ENCODE measurements at regions of chr4 and their contacts with region 1.

Region 1: GRCh38 chr4:6673660-6674499 is 19.8 kb upstream of the S100P start:
- DNase-seq: peak; percentile 92 to 97 (median 94)
- ATAC-seq: peak; percentile 83 to 86
- H3K4me3 Mint-ChIP-seq: peak overlapping the region; percentile 78 to 100 (median 96)
- H3K27ac Mint-ChIP-seq: peak overlapping the region; percentile 96 to 99 (median 99)
- H3K4me1 Mint-ChIP-seq: peaks cover 37 to 58% (median 53%) of the 10 kb centered on the region in 4 donors
- H3K27me3 Mint-ChIP-seq: peaks cover 0 to 6% (median 0%) of the 10 kb centered on the region in 5 donors

Region 2: GRCh38 chr4:6546681-6547447 is 127.0 kb before region 1 on chr4:
- POLR2A ChIA-PET with region 1: no interaction called
- DNase-seq: peak in 9 of 10 donors; percentile 6 to 67 (median 42)
- ATAC-seq: peak; percentile 55 to 59
- H3K4me3 Mint-ChIP-seq: peak overlapping the region in 1 of 10 donors; percentile 70
- H3K27ac Mint-ChIP-seq: peak overlapping the region in 1 of 10 donors; percentile 67
- H3K4me1 Mint-ChIP-seq: peaks cover 0 to 10% (median 1%) of the 10 kb centered on the region in 4 donors
- H3K27me3 Mint-ChIP-seq: peaks cover 11 to 68% (median 41%) of the 10 kb centered on the region in 5 donors

Region 3: DNA sequence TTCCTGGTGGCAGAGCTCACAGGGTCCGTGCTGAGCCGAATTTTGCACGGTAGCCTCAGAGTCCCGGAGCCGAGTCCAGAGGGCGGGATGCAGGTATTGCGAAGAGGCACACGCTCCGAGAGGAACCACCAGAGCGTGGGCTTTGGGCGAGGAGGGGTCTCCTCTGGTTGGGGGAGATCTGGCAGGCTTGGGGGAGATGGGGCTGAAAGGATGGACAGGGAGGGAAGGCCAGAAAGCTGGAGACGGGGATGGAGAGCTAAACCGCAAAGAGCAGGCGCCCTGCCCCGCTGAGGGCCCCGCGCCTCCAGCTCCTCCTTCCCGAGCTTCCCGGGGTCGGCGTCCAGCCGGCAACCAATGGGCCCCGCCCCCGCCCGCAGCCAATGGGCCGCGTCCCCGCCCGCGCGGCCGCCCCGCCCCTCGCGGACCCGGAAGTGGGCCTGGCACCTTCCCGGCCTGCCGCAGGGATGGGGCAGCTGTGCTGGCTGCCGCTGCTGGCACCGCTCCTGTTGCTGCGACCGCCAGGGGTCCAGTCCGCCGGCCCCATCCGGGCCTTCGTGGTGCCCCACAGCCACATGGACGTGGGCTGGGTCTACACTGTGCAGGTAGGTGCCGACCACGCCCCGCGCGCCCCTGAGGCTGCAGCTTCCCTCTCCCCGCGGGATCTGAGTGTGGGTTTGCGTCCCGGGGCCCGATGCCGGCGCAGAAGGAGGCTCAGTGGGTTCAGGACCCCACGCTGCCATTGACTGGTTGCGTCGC is 99.0 kb before region 1 on chr4 and contains the start of gene MAN2B2:
- POLR2A ChIA-PET with region 1: interaction called, 15 read pairs
- DNase-seq: peak; percentile 63 to 87 (median 78)
- ATAC-seq: peak; percentile 91 to 94
- H3K4me3 Mint-ChIP-seq: peak within 1 kb of the TSS; percentile 85 to 96 (median 90)
- H3K27ac Mint-ChIP-seq: peak within 1 kb of the TSS; percentile 65 to 94 (median 90)
- H3K4me1 Mint-ChIP-seq: peaks cover 11 to 20% (median 12%) of the 10 kb centered on the region in 4 donors
- H3K27me3 Mint-ChIP-seq: no peaks in the 10 kb centered on the region
- polyA plus RNA-seq, gene MAN2B2: 11.8 to 30.4 (median 14.4) TPM

Region 4: DNA sequence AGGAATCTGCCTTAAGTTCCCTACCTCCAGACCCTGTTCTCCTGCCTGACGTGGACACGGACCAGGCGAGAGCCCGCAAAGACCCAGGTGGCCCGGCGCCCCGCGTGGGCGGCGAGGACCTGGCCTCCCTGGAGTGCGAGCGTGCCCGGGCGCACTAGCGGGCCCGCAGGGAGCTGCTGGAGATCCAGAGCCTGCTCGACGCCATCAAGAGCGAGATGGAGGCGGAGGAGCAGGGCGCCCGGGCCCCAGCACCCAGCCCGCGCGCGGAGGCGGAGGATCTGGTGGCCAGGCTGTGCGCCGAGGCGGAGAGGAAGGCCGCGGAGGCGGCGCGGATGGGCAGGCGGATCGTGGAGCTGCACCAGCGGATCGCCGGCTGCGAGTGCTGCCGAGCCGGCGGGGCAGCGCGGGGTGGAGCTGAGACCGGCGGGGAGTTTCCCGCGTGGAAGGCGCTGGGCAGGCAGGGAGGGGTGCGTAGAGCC is 15.2 kb before region 1 on chr4:
- POLR2A ChIA-PET with region 1: interaction called, 38 read pairs
- DNase-seq: peak; percentile 37 to 75 (median 54)
- ATAC-seq: peak; percentile 91 to 93
- H3K4me3 Mint-ChIP-seq: peak overlapping the region; percentile 68 to 83 (median 76)
- H3K27ac Mint-ChIP-seq: peak overlapping the region in 5 of 10 donors; percentile 19 to 78 (median 57)
- H3K4me1 Mint-ChIP-seq: peaks cover 1 to 16% (median 13%) of the 10 kb centered on the region in 4 donors
- H3K27me3 Mint-ChIP-seq: peaks cover 0 to 33% (median 5%) of the 10 kb centered on the region in 5 donors

Region 5: GRCh38 chr4:6716018-6716911 is 42.4 kb after region 1 on chr4 and contains the start of gene BLOC1S4:
- POLR2A ChIA-PET with region 1: interaction called, 437 read pairs
- DNase-seq: peak; percentile 85 to 95 (median 90)
- ATAC-seq: peak; percentile 86 to 89
- H3K4me3 Mint-ChIP-seq: peak within 1 kb of the TSS; percentile 84 to 98 (median 94)
- H3K27ac Mint-ChIP-seq: peak within 1 kb of the TSS; percentile 92 to 99 (median 97)
- H3K4me1 Mint-ChIP-seq: peaks cover 15 to 45% (median 35%) of the 10 kb centered on the region in 4 donors
- H3K27me3 Mint-ChIP-seq: peaks cover 0 to 2% (median 0%) of the 10 kb centered on the region in 5 donors
- polyA plus RNA-seq, gene BLOC1S4: 65.8 to 81.6 (median 75.4) TPM

Region 6: DNA sequence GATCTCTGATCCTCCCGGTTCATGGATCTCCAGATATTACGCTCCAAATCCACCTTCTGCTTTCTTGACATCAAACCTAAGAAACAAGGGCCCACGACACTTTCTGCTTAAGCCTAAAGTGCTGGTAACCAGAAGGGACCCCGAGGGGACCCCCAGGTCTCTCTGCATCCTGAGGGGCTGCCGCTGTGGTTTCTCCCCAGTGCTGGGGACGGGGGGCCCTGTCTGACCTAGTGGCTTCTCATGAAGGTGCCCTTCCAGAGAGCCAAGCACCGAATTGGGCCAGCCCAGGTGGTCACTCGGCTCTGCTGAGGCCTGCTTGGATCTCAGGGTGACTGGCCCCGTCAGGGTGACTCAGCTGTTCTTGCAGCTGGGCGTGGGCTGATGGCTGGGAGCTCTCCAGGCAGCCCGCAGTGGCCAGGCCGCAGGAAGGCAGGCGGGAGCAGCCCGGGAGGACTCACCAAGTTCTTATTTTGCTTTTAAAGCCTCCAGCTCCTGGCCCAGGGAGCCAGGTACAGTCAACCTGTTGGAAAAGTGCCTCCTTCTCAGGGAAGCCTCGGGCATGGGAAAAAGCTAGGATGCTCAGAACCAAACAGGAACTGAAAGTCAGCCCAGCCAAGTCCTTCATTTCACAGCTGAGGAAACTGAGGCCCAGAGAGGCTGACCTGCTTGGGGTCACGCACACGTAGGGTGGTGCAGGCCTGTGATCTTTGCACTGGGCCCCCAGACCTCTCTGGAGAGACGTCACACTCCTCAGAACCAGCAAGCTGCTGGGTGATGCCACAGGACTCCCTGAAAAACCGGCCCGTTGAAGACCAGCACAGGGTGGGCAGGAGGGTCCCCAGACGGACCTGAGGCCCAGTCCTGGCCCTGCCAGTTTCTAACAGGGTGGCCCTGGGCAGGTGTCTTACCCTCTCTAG is 58.8 kb after region 1 on chr4:
- POLR2A ChIA-PET with region 1: no interaction called
- DNase-seq: no peak
- ATAC-seq: no peak
- H3K4me3 Mint-ChIP-seq: no peak overlapping the region
- H3K27ac Mint-ChIP-seq: no peak overlapping the region
- H3K4me1 Mint-ChIP-seq: peaks cover 2 to 11% (median 6%) of the 10 kb centered on the region in 4 donors
- H3K27me3 Mint-ChIP-seq: peaks cover 0 to 2% (median 0%) of the 10 kb centered on the region in 5 donors

Region 7: DNA sequence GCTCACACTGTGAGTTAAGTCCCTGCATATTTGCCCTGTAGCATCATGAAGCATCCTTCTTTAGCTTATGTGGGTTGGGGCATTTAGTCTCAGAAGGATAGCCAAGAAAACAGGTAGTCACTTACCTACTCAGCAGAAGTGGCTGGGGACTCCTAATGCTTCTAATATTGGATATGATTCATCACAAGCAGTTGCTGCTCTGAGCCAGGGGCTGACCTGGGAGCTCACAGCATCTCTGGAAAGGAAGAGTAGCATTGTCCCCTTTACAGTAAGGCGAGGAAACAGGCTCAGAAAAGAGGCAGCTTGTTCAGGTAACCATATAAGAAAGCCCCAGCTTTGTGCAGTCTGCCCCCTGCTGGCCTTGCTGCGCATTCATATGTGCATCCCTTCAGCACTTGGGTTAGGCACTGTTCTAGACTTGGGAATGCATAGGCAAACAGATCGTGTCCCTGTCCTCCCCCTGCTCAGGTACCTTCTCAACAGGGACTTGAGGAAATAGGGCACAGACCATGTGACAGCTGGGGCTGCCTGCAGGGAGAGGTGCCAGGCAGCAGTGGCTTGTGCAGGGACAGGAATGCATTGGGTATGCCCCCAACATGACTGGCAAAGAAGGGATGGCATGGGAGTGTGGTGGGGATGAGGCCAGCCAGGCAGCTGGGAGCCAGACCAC is 200.0 kb after region 1 on chr4:
- POLR2A ChIA-PET with region 1: interaction called, 23 read pairs
- DNase-seq: peak; percentile 56 to 90 (median 76)
- ATAC-seq: peak; percentile 93 to 97
- H3K4me3 Mint-ChIP-seq: no peak overlapping the region
- H3K27ac Mint-ChIP-seq: peak overlapping the region in 5 of 10 donors; percentile 17 to 69 (median 60)
- H3K4me1 Mint-ChIP-seq: peaks cover 0 to 22% (median 7%) of the 10 kb centered on the region in 4 donors
- H3K27me3 Mint-ChIP-seq: no peaks in the 10 kb centered on the region

Region 8: GRCh38 chr4:7067452-7068278 is 393.8 kb after region 1 on chr4 and contains the start of gene GRPEL1:
- POLR2A ChIA-PET with region 1: interaction called, 12 read pairs
- DNase-seq: peak; percentile 37 to 100 (median 100)
- ATAC-seq: peak; percentile 91 to 92
- H3K4me3 Mint-ChIP-seq: peak within 1 kb of the TSS; percentile 85 to 98 (median 96)
- H3K27ac Mint-ChIP-seq: peak within 1 kb of the TSS; percentile 91 to 98 (median 96)
- H3K4me1 Mint-ChIP-seq: peaks cover 18 to 59% (median 52%) of the 10 kb centered on the region in 4 donors
- H3K27me3 Mint-ChIP-seq: peaks cover 0 to 3% (median 0%) of the 10 kb centered on the region in 5 donors
- polyA plus RNA-seq, gene GRPEL1: 31.4 to 47.6 (median 36.3) TPM